T-cell (primary cell): ENCODE measurements at regions of chr12 and their contacts with region 1.

Region 1: DNA sequence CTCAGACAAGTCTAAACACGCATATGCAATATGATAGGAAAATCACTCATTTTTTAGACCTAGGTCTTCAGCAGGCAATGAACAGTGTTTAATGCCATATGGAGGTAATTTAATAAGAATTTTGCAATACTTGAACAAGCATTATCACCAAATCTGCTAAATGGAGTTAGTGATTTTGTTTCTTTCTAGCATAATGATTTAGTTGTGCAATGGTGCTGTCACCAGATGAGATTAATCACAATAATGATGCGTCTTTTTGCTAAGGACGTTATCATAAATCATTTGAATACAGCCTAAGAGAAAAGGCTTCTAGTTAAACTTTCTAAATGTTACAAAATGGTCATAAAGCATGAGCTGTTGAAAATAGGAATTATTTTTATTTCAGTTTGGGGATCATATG is 170.0 kb upstream of the SLC16A7 start:
- DNase-seq: no peak
- ATAC-seq: no peak
- H3K4me3 ChIP-seq: no peak overlapping the region
- H3K4me3 Mint-ChIP-seq: no peak overlapping the region
- H3K27ac ChIP-seq: no peak overlapping the region
- H3K27ac Mint-ChIP-seq: no peak overlapping the region
- H3K4me1 ChIP-seq: no peaks in the 10 kb centered on the region
- H3K4me1 Mint-ChIP-seq: no peaks in the 10 kb centered on the region
- H3K27me3 ChIP-seq: no peaks in the 10 kb centered on the region
- H3K27me3 Mint-ChIP-seq: no peaks in the 10 kb centered on the region

Region 2: GRCh38 chr12:58557171-58557570 is 868.6 kb before region 1 on chr12:
- CTCF ChIA-PET with region 1: no interaction called
- POLR2A ChIA-PET with region 1: no interaction called
- DNase-seq: no peak
- ATAC-seq: no peak
- H3K4me3 ChIP-seq: no peak overlapping the region
- H3K4me3 Mint-ChIP-seq: no peak overlapping the region
- H3K27ac ChIP-seq: no peak overlapping the region
- H3K27ac Mint-ChIP-seq: no peak overlapping the region
- H3K4me1 ChIP-seq: no peaks in the 10 kb centered on the region
- H3K4me1 Mint-ChIP-seq: no peaks in the 10 kb centered on the region
- H3K27me3 ChIP-seq: peaks cover 0 to 2% of the 10 kb centered on the region in 2 experiments
- H3K27me3 Mint-ChIP-seq: peaks cover 0 to 3% of the 10 kb centered on the region in 2 donors

Region 3: GRCh38 chr12:59240048-59240447 is 185.8 kb before region 1 on chr12:
- CTCF ChIA-PET with region 1: no interaction called
- POLR2A ChIA-PET with region 1: no interaction called
- DNase-seq: no peak
- ATAC-seq: no peak
- H3K4me3 ChIP-seq: no peak overlapping the region
- H3K4me3 Mint-ChIP-seq: no peak overlapping the region
- H3K27ac ChIP-seq: no peak overlapping the region
- H3K27ac Mint-ChIP-seq: no peak overlapping the region
- H3K4me1 ChIP-seq: no peaks in the 10 kb centered on the region
- H3K4me1 Mint-ChIP-seq: no peaks in the 10 kb centered on the region
- H3K27me3 ChIP-seq: no peaks in the 10 kb centered on the region
- H3K27me3 Mint-ChIP-seq: no peaks in the 10 kb centered on the region

Region 4: DNA sequence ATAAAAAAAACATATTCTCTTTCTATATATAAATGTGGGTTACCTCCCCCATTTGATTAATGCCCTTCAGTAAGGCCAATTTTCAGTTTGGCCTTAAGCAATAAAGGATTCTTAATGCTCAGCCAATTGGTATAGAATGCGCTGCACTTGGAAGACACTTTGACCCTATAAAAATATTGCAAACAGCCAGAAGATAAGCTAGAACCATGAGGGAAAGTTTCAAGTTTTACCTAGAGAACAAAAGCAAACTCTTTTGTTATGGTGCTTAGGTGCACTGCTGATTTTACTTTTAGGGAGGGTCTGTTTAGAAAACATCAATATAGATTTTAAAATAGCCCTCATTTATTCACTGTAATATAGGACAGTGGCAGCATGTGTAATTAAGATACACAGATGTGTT is 81.6 kb before region 1 on chr12:
- CTCF ChIA-PET with region 1: interaction called in 1 of 2 experiments, 11 read pairs
- POLR2A ChIA-PET with region 1: no interaction called
- DNase-seq: no peak
- ATAC-seq: no peak
- H3K4me3 ChIP-seq: no peak overlapping the region
- H3K4me3 Mint-ChIP-seq: no peak overlapping the region
- H3K27ac ChIP-seq: no peak overlapping the region
- H3K27ac Mint-ChIP-seq: no peak overlapping the region
- H3K4me1 ChIP-seq: no peaks in the 10 kb centered on the region
- H3K4me1 Mint-ChIP-seq: no peaks in the 10 kb centered on the region
- H3K27me3 ChIP-seq: no peaks in the 10 kb centered on the region
- H3K27me3 Mint-ChIP-seq: no peaks in the 10 kb centered on the region

Region 5: GRCh38 chr12:60182354-60182753 is 756.6 kb after region 1 on chr12:
- CTCF ChIA-PET with region 1: no interaction called
- POLR2A ChIA-PET with region 1: interaction called in 1 of 2 experiments, 13 read pairs
- DNase-seq: no peak
- ATAC-seq: no peak
- H3K4me3 ChIP-seq: no peak overlapping the region
- H3K4me3 Mint-ChIP-seq: no peak overlapping the region
- H3K27ac ChIP-seq: no peak overlapping the region
- H3K27ac Mint-ChIP-seq: no peak overlapping the region
- H3K4me1 ChIP-seq: no peaks in the 10 kb centered on the region
- H3K4me1 Mint-ChIP-seq: no peaks in the 10 kb centered on the region
- H3K27me3 ChIP-seq: no peaks in the 10 kb centered on the region
- H3K27me3 Mint-ChIP-seq: no peaks in the 10 kb centered on the region